Psoas muscle (tissue), 8 donors: ENCODE measurements at regions of chr12 and their contacts with region 1.

Region 1: GRCh38 chr12:122399592-122400373 is 22.7 kb downstream of the CLIP1 start:
- DNase-seq: peak; percentile 77 to 88
- ATAC-seq: peak; percentile 83 to 90 (median 85)
- H3K4me3 ChIP-seq: peak overlapping the region; percentile 71
- H3K27ac ChIP-seq: peak overlapping the region; percentile 94
- H3K4me1 ChIP-seq: peaks cover 57% of the 10 kb centered on the region
- H3K27me3 ChIP-seq: no peaks in the 10 kb centered on the region
- CTCF ChIP-seq: peak; percentile 63

Region 2: GRCh38 chr12:122350141-122350848 is 49.5 kb before region 1 on chr12:
- intact Hi-C with region 1: no loop called
- DNase-seq: peak; percentile 40 to 65
- ATAC-seq: peak in 2 of 4 donors; percentile 28 to 31
- H3K4me3 ChIP-seq: no peak overlapping the region
- H3K27ac ChIP-seq: peak overlapping the region; percentile 5
- H3K4me1 ChIP-seq: peaks cover 6% of the 10 kb centered on the region
- H3K27me3 ChIP-seq: no peaks in the 10 kb centered on the region
- CTCF ChIP-seq: peak; percentile 31

Region 3: DNA sequence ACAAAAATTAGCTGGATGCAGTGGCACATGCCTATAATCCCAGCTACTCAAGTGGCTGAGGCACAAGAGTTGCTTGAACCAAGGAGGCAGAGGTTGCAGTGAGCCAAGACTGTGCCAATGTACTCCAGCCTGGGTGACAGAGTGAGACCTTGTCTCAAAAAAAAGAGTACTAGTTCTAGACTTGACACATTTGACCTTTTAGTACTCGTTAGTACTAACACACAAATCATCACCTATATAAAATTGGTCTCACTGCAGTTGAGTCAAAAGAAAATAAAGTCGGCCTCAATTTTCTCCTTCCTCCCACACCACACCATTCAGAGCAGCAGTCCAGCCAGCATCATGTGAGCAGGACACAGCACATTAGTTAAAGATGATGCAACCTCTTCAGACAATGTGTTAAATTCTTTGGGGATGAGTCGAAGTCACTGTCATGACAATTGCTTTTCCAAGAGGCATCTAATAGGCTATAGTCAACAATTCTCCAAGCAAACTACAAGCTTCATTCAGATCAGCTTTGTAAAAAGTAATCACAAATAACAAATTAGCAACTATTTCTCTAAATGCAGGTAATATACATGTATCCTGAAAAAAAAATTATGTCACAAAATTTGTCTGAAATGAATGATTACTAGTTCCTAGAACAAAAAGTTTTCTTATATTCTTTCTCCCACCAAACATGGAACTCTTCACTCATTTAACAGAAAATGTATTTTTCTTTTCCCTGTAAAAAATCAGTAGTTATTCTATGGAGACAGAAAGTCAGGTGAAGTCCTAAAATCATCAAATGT is 32.9 kb before region 1 on chr12:
- intact Hi-C with region 1: loop called in 1 of 2 experiments (anchors 5 kb)
- DNase-seq: peak; percentile 58 to 82
- ATAC-seq: peak; percentile 79 to 88 (median 83)
- H3K4me3 ChIP-seq: no peak overlapping the region
- H3K27ac ChIP-seq: peak overlapping the region; percentile 89
- H3K4me1 ChIP-seq: peaks cover 80% of the 10 kb centered on the region
- H3K27me3 ChIP-seq: no peaks in the 10 kb centered on the region
- CTCF ChIP-seq: no peak

Region 4: GRCh38 chr12:123223241-123223668 is 823.5 kb after region 1 on chr12:
- intact Hi-C with region 1: no loop called
- DNase-seq: no peak
- ATAC-seq: no peak
- H3K4me3 ChIP-seq: no peak overlapping the region
- H3K27ac ChIP-seq: no peak overlapping the region
- H3K4me1 ChIP-seq: no peaks in the 10 kb centered on the region
- H3K27me3 ChIP-seq: no peaks in the 10 kb centered on the region
- CTCF ChIP-seq: no peak